Breast epithelium (tissue), 4 donors: ENCODE measurements at regions of chr1 and their contacts with region 1.

Region 1: GRCh38 chr1:19062258-19063029 is 106.0 kb upstream of the IFFO2 start:
- DNase-seq: no peak
- H3K4me3 ChIP-seq: no peak overlapping the region
- H3K27ac ChIP-seq: no peak overlapping the region
- H3K4me1 ChIP-seq: peaks cover 3 to 8% of the 10 kb centered on the region in 2 donors
- H3K27me3 ChIP-seq: peaks cover 0 to 11% of the 10 kb centered on the region in 2 donors
- CTCF ChIP-seq: no peak
- POLR2A ChIP-seq: no peak

Region 2: GRCh38 chr1:19074902-19075721 is 12.7 kb after region 1 on chr1:
- intact Hi-C with region 1: no loop called
- DNase-seq: peak in 1 of 2 donors; percentile 94
- H3K4me3 ChIP-seq: peak overlapping the region in 1 of 3 donors; percentile 19
- H3K27ac ChIP-seq: peak overlapping the region; percentile 89 to 90
- H3K4me1 ChIP-seq: peaks cover 2 to 15% of the 10 kb centered on the region in 2 donors
- H3K27me3 ChIP-seq: no peaks in the 10 kb centered on the region
- CTCF ChIP-seq: no peak
- POLR2A ChIP-seq: no peak

Region 3: GRCh38 chr1:19088717-19089442 is 26.4 kb after region 1 on chr1:
- intact Hi-C with region 1: loop called (anchors 1 kb)
- DNase-seq: no peak
- H3K4me3 ChIP-seq: no peak overlapping the region
- H3K27ac ChIP-seq: no peak overlapping the region
- H3K4me1 ChIP-seq: no peaks in the 10 kb centered on the region
- H3K27me3 ChIP-seq: no peaks in the 10 kb centered on the region
- CTCF ChIP-seq: no peak
- POLR2A ChIP-seq: no peak